Activated CD8-positive, alpha-beta memory T cell treated with anti-CD3 and anti-CD28 coated beads, Interleukin-2, amount 10 ng/mL, durations not matched to agents 7 days and 5 days (primary cell): ENCODE measurements at regions of chr3 and their contacts with region 1.

Region 1: GRCh38 chr3:32460031-32460749 is 42.5 kb downstream of the CMTM6 start:
- DNase-seq: peak; percentile 92
- ATAC-seq: peak; percentile 89
- H3K4me3 Mint-ChIP-seq: peak overlapping the region; percentile 67
- H3K27ac Mint-ChIP-seq: no peak overlapping the region
- H3K4me1 Mint-ChIP-seq: peaks cover 29% of the 10 kb centered on the region
- H3K27me3 Mint-ChIP-seq: no peaks in the 10 kb centered on the region

Region 2: GRCh38 chr3:32414520-32415202 is 45.5 kb before region 1 on chr3:
- CTCF ChIA-PET with region 1: interaction called, 15 read pairs
- DNase-seq: peak; percentile 79
- ATAC-seq: peak; percentile 95
- H3K4me3 Mint-ChIP-seq: peak overlapping the region; percentile 41
- H3K27ac Mint-ChIP-seq: peak overlapping the region; percentile 86
- H3K4me1 Mint-ChIP-seq: peaks cover 66% of the 10 kb centered on the region
- H3K27me3 Mint-ChIP-seq: no peaks in the 10 kb centered on the region

Region 3: DNA sequence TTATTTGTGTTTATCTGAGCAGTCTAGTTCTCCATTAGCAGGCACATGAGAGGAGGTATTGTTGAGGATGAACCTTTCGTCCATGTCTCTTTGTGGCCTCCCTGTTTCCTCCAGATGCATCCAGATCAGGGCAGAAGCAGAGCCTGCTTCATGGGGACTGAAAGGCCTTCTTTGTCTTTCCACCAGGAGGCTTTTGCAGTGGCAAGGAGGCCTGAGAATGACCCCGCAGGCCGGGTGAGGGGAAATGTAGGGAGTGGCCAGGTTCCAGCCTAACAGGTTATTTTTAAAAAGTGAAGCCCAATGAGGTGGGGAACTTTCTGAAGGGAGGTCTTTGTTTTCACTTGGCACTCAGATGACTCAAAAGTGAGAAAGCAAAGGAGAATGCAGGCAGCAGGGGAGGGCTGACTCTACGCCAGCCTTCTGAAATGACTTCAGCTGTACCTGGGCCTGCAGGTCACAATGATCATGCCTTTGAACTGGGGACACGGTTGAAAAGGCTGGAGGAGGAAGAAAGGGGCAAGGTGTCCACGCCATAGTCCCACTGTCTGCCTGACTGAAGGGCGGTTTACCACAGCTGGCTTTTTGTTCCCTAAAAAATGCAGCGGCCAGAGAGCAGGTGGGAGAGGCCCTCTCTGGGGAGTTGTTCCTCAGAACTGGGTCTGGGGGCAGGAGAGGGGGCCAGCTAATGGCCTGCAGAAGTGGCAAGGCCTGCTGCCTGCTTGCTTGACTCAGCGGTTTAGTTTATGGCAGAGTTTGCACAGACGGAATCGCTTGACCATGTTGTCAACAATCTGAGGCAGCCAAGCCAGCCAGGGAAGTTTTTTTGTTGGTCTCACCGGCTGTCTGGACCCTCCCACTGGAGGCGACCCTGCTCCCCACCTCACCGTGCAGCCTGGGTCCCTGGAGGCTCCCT is 39.8 kb before region 1 on chr3:
- CTCF ChIA-PET with region 1: interaction called, 10 read pairs
- DNase-seq: peak; percentile 65
- ATAC-seq: peak; percentile 51
- H3K4me3 Mint-ChIP-seq: peak overlapping the region; percentile 52
- H3K27ac Mint-ChIP-seq: peak overlapping the region; percentile 92
- H3K4me1 Mint-ChIP-seq: peaks cover 87% of the 10 kb centered on the region
- H3K27me3 Mint-ChIP-seq: no peaks in the 10 kb centered on the region

Region 4: GRCh38 chr3:32428092-32429068 is 31.8 kb before region 1 on chr3:
- CTCF ChIA-PET with region 1: interaction called, 12 read pairs
- DNase-seq: peak; percentile 75
- ATAC-seq: peak; percentile 50
- H3K4me3 Mint-ChIP-seq: peak overlapping the region; percentile 61
- H3K27ac Mint-ChIP-seq: peak overlapping the region; percentile 99
- H3K4me1 Mint-ChIP-seq: peaks cover 91% of the 10 kb centered on the region
- H3K27me3 Mint-ChIP-seq: no peaks in the 10 kb centered on the region

Region 5: GRCh38 chr3:32438596-32439344 is 21.4 kb before region 1 on chr3:
- CTCF ChIA-PET with region 1: interaction called, 27 read pairs
- DNase-seq: peak; percentile 56
- ATAC-seq: peak; percentile 74
- H3K4me3 Mint-ChIP-seq: peak overlapping the region; percentile 45
- H3K27ac Mint-ChIP-seq: peak overlapping the region; percentile 94
- H3K4me1 Mint-ChIP-seq: peaks cover 72% of the 10 kb centered on the region
- H3K27me3 Mint-ChIP-seq: no peaks in the 10 kb centered on the region

Region 6: DNA sequence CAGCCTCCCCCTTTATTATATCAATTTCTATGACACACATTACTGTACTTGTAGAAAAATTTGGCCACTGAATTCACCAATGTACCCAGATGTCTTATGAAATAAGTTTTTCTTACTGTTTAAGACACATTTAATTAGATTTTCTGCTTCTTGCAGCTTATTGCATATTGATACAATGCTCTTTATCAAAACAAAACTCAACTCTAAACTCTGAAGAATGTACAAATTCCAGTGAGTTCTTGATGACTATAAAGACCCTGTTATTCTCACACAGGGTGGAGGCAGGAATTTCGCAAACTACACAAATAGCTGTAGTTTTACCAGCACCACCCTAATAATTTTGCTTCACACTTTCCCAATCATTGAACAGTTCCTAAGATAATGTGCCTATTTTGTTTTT is 20.4 kb after region 1 on chr3:
- CTCF ChIA-PET with region 1: no interaction called
- DNase-seq: no peak
- ATAC-seq: no peak
- H3K4me3 Mint-ChIP-seq: no peak overlapping the region
- H3K27ac Mint-ChIP-seq: no peak overlapping the region
- H3K4me1 Mint-ChIP-seq: peaks cover 16% of the 10 kb centered on the region
- H3K27me3 Mint-ChIP-seq: no peaks in the 10 kb centered on the region